Activated CD4-positive, alpha-beta T cell treated with anti-CD3 and anti-CD28 coated beads, Interleukin-2, amount 10 ng/mL, durations not matched to agents 24 days and 14 days (primary cell): ENCODE measurements at regions of chr6 and their contacts with region 1.

Region 1: DNA sequence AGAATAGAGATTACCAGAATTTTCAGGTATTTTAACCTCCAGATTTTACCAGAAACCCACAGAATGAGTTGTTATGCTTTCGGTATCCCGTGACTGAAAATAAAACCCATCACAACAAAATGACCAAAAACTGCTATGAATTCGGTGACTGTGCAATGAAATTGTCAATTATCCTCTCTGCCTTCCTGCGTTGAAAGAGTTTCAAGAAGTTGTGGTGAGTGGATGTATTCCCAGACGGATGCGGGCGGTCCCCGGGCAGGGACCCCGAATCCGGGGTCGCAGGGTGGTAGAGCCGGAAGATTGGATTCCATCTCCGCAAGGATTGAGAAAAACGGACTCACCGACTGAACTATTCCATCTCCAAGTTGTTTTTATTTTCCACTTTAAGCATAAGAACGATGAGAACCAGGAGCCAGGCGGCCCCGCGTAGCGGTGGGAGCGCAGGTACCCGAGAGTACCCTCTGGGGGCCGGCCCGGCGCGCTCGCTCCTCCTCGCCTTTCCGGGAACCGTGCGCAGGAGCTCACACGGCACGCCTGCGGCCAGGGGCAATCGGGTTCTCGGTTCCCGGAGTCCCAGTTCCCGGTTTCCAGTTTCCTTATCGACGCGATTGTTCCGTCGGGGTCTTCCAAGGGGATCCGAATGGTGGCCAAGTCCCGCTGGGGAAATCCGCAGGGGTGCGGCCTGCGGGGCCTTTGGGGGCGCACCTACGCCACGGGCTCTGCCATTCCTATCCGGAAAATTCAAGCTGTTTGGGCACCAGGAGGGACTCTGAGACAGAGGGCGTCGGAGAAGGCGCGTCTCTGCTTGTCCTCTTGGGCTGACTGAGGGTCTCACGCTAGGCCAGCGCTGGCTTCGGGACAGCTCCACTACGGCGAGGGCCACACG is 104.9 kb upstream of the PRDM1 start:
- DNase-seq: peak; percentile 86
- H3K4me3 Mint-ChIP-seq: peak overlapping the region; percentile 78
- H3K27ac Mint-ChIP-seq: peak overlapping the region; percentile 84
- H3K4me1 Mint-ChIP-seq: peaks cover 54% of the 10 kb centered on the region
- H3K27me3 Mint-ChIP-seq: peaks cover 6% of the 10 kb centered on the region

Region 2: DNA sequence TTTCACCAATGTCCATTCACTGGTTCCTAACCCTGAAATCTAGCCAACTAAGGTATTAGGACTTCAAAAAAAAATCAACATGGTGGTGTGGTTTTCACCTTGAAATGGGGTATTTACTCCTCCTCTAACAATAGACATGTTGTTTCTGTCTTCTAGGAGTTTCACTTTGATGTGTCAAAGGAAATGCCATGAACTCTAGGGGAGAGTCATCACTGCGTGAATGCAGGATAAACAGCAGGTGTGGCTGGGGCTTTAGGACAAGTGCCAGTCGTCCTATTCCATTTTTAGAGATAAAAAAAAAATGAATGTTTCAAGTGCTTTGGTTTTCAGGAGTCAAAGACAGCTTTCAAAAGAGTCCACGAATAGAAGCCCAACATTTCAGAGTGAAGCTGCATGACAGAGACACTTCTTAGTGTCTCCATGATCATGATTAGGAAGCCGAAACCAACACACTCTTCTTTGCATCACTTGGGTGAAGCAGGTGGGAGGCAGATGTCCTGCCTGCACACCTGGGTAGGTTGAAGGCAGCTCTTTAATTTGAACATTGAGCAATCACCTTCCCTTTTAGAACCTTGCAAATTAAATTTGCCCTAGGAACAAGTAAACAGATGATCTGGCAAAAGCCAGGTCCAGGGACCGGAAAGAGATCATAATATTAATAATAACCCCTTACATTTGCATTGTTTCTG is 223.6 kb before region 1 on chr6:
- intact Hi-C with region 1: loop called (anchors 2 kb)
- DNase-seq: peak; percentile 75
- H3K4me3 Mint-ChIP-seq: peak overlapping the region; percentile 46
- H3K27ac Mint-ChIP-seq: peak overlapping the region; percentile 89
- H3K4me1 Mint-ChIP-seq: peaks cover 46% of the 10 kb centered on the region
- H3K27me3 Mint-ChIP-seq: no peaks in the 10 kb centered on the region

Region 3: GRCh38 chr6:105810105-105810921 is 170.9 kb before region 1 on chr6:
- intact Hi-C with region 1: loop called (anchors 1 kb)
- DNase-seq: peak; percentile 89
- H3K4me3 Mint-ChIP-seq: peak overlapping the region; percentile 45
- H3K27ac Mint-ChIP-seq: peak overlapping the region; percentile 71
- H3K4me1 Mint-ChIP-seq: peaks cover 67% of the 10 kb centered on the region
- H3K27me3 Mint-ChIP-seq: no peaks in the 10 kb centered on the region

Region 4: GRCh38 chr6:105844275-105844883 is 136.9 kb before region 1 on chr6:
- intact Hi-C with region 1: no loop called
- DNase-seq: peak; percentile 45
- H3K4me3 Mint-ChIP-seq: no peak overlapping the region
- H3K27ac Mint-ChIP-seq: no peak overlapping the region
- H3K4me1 Mint-ChIP-seq: no peaks in the 10 kb centered on the region
- H3K27me3 Mint-ChIP-seq: peaks cover 8% of the 10 kb centered on the region

Region 5: GRCh38 chr6:105920071-105920470 is 61.2 kb before region 1 on chr6:
- intact Hi-C with region 1: loop called (anchors 2 kb)
- DNase-seq: no peak
- H3K4me3 Mint-ChIP-seq: no peak overlapping the region
- H3K27ac Mint-ChIP-seq: no peak overlapping the region
- H3K4me1 Mint-ChIP-seq: peaks cover 15% of the 10 kb centered on the region
- H3K27me3 Mint-ChIP-seq: no peaks in the 10 kb centered on the region

Region 6: DNA sequence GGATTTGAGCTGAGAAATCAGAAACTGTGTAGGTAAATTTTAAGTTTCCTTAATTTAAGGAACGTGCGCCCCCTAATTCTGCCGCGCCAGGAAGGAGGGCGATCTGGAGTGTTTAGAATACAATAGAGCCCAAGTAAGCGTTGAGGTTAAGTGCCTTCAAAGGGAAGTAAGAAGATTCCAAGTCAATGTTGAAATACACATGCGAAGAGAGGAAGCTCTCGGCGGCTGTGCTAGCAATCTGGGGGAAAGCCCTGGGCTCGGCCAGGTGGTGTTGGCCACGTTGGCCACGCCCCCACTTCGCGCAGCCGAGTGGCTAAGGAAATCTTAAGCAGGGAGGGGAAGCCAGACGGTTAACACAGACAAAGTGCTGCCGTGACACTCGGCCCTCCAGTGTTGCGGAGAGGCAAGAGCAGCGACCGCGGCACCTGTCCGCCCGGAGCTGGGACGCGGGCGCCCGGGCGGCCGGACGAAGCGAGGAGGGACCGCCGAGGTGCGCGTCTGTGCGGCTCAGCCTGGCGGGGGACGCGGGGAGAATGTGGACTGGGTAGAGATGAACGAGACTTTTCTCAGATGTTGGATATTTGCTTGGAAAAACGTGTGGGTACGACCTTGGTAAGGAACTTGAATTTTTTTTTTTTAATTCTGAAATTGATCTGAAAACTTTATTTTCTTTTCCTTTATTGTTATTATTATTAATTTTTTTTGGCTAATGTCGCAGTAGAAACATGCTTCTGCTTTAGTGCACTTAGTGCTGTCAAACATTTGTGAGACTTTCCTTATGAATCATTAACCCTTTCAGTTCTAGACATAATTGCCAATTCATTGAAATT is 105.0 kb after region 1 on chr6 and contains the start of gene PRDM1:
- intact Hi-C with region 1: loop called (anchors 1 kb)
- DNase-seq: peak; percentile 95
- H3K4me3 Mint-ChIP-seq: peak within 1 kb of the TSS; percentile 93
- H3K27ac Mint-ChIP-seq: peak within 1 kb of the TSS; percentile 87
- H3K4me1 Mint-ChIP-seq: peaks cover 72% of the 10 kb centered on the region
- H3K27me3 Mint-ChIP-seq: peaks cover 10% of the 10 kb centered on the region
- total RNA-seq, gene PRDM1: 35.9 and 37.4 TPM in 2 replicates

Region 7: GRCh38 chr6:106220485-106220884 is 239.2 kb after region 1 on chr6:
- intact Hi-C with region 1: no loop called
- DNase-seq: no peak
- H3K4me3 Mint-ChIP-seq: no peak overlapping the region
- H3K27ac Mint-ChIP-seq: no peak overlapping the region
- H3K4me1 Mint-ChIP-seq: peaks cover 20% of the 10 kb centered on the region
- H3K27me3 Mint-ChIP-seq: no peaks in the 10 kb centered on the region